Right ventricle myocardium superior (tissue), 1 donor: ENCODE measurements at regions of chr16 and their contacts with region 1.

Region 1: DNA sequence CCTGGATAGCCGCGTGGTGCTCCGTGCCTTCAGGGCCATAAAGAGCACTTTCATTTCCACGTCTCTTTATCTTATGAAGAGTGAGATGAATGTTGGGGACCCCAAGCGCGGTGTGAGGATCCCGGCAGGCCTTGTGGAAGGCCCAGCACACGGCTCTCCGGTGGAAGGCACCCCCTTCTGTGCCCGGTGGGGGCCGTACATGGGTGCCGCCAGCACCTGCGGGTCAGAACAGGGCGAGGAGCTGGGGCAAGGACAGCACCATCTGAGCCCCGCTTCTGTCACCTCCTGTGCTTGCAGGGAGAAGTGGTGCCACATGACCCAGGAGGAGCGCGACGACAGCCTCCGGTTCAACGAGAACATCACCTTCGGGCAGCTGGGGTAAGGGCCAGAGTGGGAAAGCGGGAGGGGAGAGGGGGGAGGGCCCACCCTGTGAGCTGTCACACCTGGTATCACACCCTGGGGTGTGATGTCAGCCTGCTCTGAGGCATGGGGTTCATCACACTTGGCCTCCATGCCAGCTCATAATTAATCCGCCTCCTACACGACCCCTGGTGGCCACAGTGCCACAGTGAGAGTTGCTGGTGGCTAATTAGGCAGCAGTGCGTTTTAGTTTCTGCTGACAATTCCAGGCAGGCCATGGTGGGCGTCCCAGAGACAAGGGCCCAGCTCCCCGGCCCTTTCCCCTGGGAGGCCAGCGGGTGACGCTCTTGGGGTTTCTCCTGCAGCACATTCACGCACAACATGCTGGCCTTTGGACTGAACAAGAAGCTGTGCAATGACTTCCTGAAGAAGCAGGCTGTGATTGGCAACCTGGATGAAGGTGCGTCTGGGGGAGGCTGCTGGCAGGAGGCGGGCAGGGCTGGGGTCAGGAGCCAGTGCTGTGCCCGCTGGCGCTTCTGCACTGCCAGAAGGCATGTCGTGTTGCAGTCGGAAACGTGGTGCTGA is 25.7 kb downstream of the CIBAR2 start:
- DNase-seq: peak; percentile 90
- ATAC-seq: peak; percentile 73

Region 2: GRCh38 chr16:84754353-84754856 is 332.2 kb before region 1 on chr16:
- intact Hi-C with region 1: loop called (anchors 10 kb)
- DNase-seq: no peak
- ATAC-seq: peak; percentile 85

Region 3: GRCh38 chr16:84985079-84986065 is 101.2 kb before region 1 on chr16:
- intact Hi-C with region 1: loop called (anchors 10 kb)
- DNase-seq: no peak
- ATAC-seq: no peak

Region 4: DNA sequence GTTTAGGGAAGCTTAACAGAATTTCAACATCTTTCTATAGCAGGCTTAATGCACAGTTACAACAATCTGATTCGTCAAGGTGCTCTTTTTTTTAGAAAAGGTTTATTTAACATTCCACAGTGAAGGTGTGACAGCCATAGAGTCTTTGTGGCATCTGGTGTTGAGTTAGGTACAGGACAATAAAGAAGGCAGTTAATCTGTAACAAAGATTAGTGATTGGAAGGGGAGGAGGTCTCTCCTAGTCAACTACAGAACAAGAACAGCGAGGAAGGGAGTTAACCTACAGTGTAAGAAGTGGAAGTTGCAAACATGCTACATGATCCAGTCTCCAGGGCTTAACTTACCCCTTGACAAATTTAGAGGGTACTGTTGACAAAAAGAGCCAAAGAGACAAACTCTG is 72.3 kb before region 1 on chr16:
- intact Hi-C with region 1: no loop called
- DNase-seq: no peak
- ATAC-seq: no peak

Region 5: GRCh38 chr16:85027349-85027957 is 59.2 kb before region 1 on chr16 and contains the start of gene KIAA0513:
- intact Hi-C with region 1: loop called (anchors 10 kb)
- DNase-seq: peak; percentile 96
- ATAC-seq: peak; percentile 93
- total RNA-seq, gene KIAA0513: 10.4 TPM